ENCODE measurements at regions of chr18 and their contacts with region 1.

Region 1: GRCh38 chr18:12934454-12935071 is 13.2 kb upstream of the SEH1L start:
- DNase-seq: peak; percentile 88
- ATAC-seq: peak; percentile 94 to 96

Region 2: DNA sequence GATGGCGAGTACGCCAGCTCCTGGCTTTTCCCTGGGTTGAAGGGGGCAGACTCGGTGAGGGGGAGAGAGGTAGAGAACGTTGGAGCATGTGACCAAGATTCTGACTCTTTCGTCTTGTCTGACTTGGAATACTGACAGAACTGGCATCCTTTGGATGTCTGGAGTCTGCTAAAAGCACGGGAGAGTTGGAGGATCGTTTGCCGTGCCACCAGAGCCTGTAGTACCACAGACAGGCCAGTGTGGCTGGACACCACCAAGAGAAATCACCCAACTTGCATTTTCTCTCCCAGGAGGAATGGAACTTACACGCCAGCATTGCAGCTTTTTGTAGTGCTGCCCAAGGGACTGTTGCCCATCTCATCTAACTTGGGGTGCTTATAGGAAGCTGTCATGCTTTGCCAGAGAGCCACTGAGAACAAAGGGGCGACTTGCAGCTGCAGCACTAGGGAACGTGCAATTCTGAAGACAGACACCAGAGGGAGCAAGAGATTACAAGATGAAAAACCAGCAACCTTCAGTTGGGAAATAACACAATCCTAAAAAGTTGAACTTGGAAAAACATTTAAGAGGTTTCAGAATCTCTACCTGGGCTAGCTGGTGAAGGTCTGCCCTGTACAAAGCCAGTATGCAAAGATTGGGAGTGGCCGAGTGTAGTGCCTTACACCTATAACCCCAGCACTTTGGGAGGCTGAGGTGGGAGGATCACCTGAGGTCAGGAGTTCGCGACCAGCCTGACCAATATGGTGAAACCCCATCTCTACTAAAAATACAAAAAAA is 207.6 kb before region 1 on chr18:
- intact Hi-C with region 1: loop called (anchors 1 to 2 kb)
- DNase-seq: no peak
- ATAC-seq: peak; percentile 50 to 57

Region 3: DNA sequence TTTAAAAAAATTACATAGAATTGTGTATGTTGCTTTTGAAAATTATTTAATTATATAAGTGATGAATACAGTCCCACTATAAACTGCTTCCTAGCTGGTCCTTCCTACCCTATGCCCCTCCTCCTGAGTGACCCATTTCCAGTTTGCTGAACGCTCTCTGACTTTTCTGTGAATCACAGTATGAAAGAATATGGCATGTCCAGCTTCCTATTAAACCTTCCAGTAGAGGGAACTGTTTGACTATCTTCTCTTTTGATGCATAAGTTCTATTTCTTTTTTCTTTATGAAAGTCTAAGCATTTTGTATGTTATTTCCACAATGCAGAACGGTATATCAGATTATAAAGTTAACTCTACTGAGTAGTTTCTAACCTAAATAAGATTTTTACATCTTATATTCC is 190.5 kb before region 1 on chr18:
- intact Hi-C with region 1: loop called in 1 of 2 experiments (anchors 5 kb)
- DNase-seq: no peak
- ATAC-seq: peak; percentile 71 to 81

Measured in left cardiac atrium (tissue), 4 donors.